HEK293 (cell line): ENCODE measurements at regions of chr17 and their contacts with region 1.

Region 1: GRCh38 chr17:67200720-67201301 is 44.2 kb downstream of the HELZ start:
- H3K4me3 ChIP-seq: no peak overlapping the region
- H3K27ac ChIP-seq: no peak overlapping the region
- H3K4me1 ChIP-seq: peaks cover 2% of the 10 kb centered on the region; the same call in 1 of the 2 replicates
- CTCF ChIP-seq: no peak

Region 2: DNA sequence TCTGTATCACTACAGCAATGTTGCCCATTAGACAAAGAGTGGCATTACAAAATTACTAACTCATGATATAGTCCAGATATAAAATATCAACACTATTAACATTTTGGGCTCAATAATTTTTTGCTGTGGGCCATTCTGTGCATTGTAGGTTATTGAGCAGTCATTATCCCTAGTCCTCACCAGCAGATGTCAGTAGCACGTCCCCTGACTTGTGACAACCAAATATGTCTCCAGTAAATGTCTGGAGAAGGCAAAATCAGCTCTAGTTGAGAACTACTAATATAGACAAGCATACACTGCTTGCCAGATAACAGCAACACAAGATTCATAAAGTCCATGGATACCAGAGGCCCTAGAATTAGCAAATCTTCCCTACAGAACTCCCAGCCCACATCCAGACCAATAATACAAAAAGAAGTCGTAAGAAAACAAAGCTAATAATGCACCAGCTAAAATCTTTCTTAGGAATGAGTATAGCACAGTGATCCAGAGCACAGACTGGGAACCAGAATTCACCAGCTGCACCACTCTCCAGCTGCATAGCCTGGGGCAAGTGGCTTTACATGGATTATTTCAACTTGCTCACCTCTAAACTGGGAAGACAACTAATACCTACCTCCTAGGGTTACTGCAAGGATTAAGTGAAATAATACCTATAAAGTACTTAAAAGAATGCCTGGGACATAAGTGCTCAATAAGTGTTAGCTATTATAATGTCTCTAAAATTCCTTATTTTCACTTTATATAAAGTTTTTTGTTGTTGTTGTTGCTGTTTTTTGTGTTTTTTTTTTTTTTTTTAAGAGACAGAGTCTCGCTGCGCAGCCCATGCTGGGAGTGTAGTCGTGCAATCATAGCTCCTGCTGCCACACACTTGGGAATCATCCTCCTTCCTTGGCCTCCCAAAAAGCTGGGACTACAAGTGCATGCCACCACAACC is 20.5 kb after region 1 on chr17:
- CTCF ChIA-PET with region 1: interaction called, 12 read pairs
- POLR2A ChIA-PET with region 1: no interaction called
- H3K4me3 ChIP-seq: no peak overlapping the region
- H3K27ac ChIP-seq: no peak overlapping the region
- H3K4me1 ChIP-seq: peaks cover 3% of the 10 kb centered on the region; the same call in 1 of the 2 replicates
- CTCF ChIP-seq: peak; percentile 45; the same call in 1 of the 2 replicates